ENCODE measurements at regions of chr9 and their contacts with region 1.

Region 1: DNA sequence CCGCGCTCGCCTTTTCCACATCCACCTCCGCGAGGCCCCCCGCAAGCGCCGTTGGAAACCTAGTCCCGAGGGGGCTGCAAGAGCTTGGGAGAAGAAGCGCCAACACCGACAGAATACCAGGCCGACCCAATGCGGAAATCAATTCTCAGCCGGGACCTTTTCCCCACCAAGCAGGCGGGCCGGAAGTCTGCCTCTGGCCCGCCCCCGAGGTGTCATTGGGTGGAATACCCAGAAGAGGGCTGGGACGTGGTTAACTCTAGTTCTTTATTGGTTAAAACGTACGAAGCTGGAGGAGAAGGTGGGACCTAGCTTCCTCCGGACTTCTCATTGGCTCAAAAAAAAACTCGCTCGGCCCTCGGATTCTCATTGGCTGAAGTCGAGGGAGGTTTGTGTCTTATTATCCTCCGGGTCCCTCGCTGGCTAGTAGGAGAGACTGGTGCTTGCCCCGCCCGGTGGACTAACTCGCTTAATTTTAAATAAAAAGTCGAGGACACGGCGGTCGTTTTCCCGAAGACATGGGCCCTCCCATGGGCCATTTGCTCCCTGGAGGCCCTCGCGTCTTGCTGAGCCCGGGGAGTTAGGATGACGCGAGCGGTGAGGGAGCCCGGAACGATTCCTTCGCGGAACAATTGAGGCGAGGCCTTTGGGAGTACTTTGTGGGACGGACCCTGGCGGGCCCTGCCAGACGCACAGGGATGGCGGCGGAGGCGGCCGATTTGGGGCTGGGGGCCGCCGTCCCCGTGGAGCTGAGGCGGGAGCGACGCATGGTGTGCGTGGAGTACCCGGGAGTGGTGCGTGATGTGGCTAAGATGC is at the start of gene GTF3C5:
- DNase-seq: peak; percentile 80 to 98 (median 91)
- ATAC-seq: peak; percentile 97
- H3K4me3 ChIP-seq: peak within 1 kb of the TSS; percentile 60 to 96
- H3K4me3 Mint-ChIP-seq: peak within 1 kb of the TSS; percentile 99
- H3K27ac ChIP-seq: peak within 1 kb of the TSS; percentile 75 to 94
- H3K27ac Mint-ChIP-seq: peak within 1 kb of the TSS; percentile 98
- H3K4me1 ChIP-seq: peaks cover 27% of the 10 kb centered on the region
- H3K4me1 Mint-ChIP-seq: peaks cover 54% of the 10 kb centered on the region
- H3K27me3 ChIP-seq: no peaks in the 10 kb centered on the region
- H3K27me3 Mint-ChIP-seq: no peaks in the 10 kb centered on the region
- CTCF ChIP-seq: no peak
- total RNA-seq, gene GTF3C5: 54.1 to 58.7 TPM

Region 2: GRCh38 chr9:131530920-131531832 is 1499.3 kb before region 1 on chr9 and contains the start of gene UCK1:
- CTCF ChIA-PET with region 1: no interaction called
- POLR2A ChIA-PET with region 1: no interaction called
- intact Hi-C with region 1: loop called in 1 of 2 experiments (anchors 5 kb)
- DNase-seq: peak; percentile 42 to 89 (median 68)
- ATAC-seq: peak; percentile 91
- H3K4me3 ChIP-seq: peak within 1 kb of the TSS; percentile 64 to 73
- H3K4me3 Mint-ChIP-seq: peak within 1 kb of the TSS; percentile 74
- H3K27ac ChIP-seq: peak within 1 kb of the TSS; percentile 51 to 53
- H3K27ac Mint-ChIP-seq: peak within 1 kb of the TSS; percentile 55
- H3K4me1 ChIP-seq: peaks cover 35% of the 10 kb centered on the region
- H3K4me1 Mint-ChIP-seq: peaks cover 35% of the 10 kb centered on the region
- H3K27me3 ChIP-seq: no peaks in the 10 kb centered on the region
- H3K27me3 Mint-ChIP-seq: no peaks in the 10 kb centered on the region
- CTCF ChIP-seq: no peak
- total RNA-seq, gene UCK1: 22.6 to 24.7 TPM

Region 3: DNA sequence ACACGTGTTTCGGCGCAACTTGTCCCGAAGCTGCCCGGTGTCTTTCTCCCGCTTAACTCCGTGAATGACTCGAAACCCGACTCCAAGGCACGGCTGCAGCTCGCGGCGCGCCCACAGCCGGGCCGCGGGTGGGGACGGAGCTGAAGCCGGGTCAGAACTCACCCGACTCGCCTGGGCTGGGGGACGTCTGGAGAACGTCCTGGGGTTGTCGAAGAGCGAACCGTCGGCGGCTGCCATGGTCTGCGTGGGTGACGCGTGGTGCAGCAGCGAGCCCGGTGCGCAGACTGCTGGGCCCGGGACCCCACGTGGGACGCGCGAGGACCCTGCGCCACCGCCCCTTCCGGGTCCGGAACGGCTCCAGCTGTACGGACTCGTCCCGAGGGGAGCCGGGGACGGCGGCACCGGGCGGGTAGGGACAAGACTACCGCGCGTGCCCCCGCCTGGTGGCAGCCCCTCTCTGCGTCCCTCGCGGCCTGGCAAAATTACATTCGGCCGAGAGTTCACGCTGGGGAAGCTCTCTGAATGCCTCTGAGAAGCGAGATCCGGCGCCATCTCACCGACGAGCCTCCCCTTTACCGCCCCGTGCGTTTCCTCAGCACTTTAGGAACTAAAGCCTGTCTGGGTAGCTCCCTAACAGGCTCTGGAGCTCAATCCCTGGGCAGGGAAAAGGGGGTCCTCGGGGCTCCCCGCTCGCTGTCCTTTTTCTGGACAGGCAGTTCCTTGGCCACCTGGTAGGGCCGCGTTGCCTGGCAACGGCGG is 360.6 kb before region 1 on chr9 and contains the start of gene DDX31:
- CTCF ChIA-PET with region 1: no interaction called
- POLR2A ChIA-PET with region 1: interaction called, 4 read pairs
- intact Hi-C with region 1: loop called in 1 of 2 experiments (anchors 5 kb)
- DNase-seq: peak; percentile 79 to 94 (median 88)
- ATAC-seq: peak; percentile 77
- H3K4me3 ChIP-seq: peak within 1 kb of the TSS; percentile 100
- H3K4me3 Mint-ChIP-seq: peak within 1 kb of the TSS; percentile 91
- H3K27ac ChIP-seq: peak within 1 kb of the TSS; percentile 98 to 99
- H3K27ac Mint-ChIP-seq: peak within 1 kb of the TSS; percentile 97
- H3K4me1 ChIP-seq: peaks cover 22% of the 10 kb centered on the region
- H3K4me1 Mint-ChIP-seq: peaks cover 63% of the 10 kb centered on the region
- H3K27me3 ChIP-seq: no peaks in the 10 kb centered on the region
- H3K27me3 Mint-ChIP-seq: no peaks in the 10 kb centered on the region
- CTCF ChIP-seq: no peak
- total RNA-seq, gene DDX31: 14.1 to 15.6 TPM

Region 4: GRCh38 chr9:133004091-133004998 is 26.2 kb before region 1 on chr9:
- CTCF ChIA-PET with region 1: no interaction called
- POLR2A ChIA-PET with region 1: no interaction called
- intact Hi-C with region 1: no loop called
- DNase-seq: no peak
- ATAC-seq: no peak
- H3K4me3 ChIP-seq: no peak overlapping the region
- H3K4me3 Mint-ChIP-seq: no peak overlapping the region
- H3K27ac ChIP-seq: no peak overlapping the region
- H3K27ac Mint-ChIP-seq: no peak overlapping the region
- H3K4me1 ChIP-seq: no peaks in the 10 kb centered on the region
- H3K4me1 Mint-ChIP-seq: no peaks in the 10 kb centered on the region
- H3K27me3 ChIP-seq: peaks cover 3 to 9% of the 10 kb centered on the region in 2 experiments
- H3K27me3 Mint-ChIP-seq: peaks cover 46% of the 10 kb centered on the region
- CTCF ChIP-seq: no peak

Region 5: DNA sequence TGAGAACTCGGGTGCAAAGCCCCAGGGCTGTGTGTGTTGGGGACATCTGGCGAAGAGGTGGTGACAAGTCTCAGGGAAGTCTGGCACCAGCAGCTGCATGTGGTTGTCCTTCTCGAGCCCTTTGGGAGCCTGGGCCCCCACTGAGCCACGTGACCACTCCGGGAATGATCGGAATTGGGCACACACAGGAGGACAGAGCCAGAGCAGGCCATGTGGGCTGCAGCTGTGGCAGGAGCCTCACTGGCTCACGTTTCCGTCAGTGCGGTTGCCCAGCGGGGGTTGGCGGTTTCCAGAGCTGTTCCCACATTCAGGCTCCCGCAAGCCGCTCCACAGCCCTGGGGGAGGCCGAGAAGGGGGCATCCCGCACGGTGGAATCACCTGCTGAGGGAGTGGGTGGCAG is 24.4 kb after region 1 on chr9:
- CTCF ChIA-PET with region 1: no interaction called
- POLR2A ChIA-PET with region 1: no interaction called
- intact Hi-C with region 1: no loop called
- DNase-seq: no peak
- ATAC-seq: no peak
- H3K4me3 ChIP-seq: no peak overlapping the region
- H3K4me3 Mint-ChIP-seq: no peak overlapping the region
- H3K27ac ChIP-seq: no peak overlapping the region
- H3K27ac Mint-ChIP-seq: no peak overlapping the region
- H3K4me1 ChIP-seq: peaks cover 37% of the 10 kb centered on the region
- H3K4me1 Mint-ChIP-seq: peaks cover 29% of the 10 kb centered on the region
- H3K27me3 ChIP-seq: no peaks in the 10 kb centered on the region
- H3K27me3 Mint-ChIP-seq: no peaks in the 10 kb centered on the region
- CTCF ChIP-seq: no peak

Region 6: DNA sequence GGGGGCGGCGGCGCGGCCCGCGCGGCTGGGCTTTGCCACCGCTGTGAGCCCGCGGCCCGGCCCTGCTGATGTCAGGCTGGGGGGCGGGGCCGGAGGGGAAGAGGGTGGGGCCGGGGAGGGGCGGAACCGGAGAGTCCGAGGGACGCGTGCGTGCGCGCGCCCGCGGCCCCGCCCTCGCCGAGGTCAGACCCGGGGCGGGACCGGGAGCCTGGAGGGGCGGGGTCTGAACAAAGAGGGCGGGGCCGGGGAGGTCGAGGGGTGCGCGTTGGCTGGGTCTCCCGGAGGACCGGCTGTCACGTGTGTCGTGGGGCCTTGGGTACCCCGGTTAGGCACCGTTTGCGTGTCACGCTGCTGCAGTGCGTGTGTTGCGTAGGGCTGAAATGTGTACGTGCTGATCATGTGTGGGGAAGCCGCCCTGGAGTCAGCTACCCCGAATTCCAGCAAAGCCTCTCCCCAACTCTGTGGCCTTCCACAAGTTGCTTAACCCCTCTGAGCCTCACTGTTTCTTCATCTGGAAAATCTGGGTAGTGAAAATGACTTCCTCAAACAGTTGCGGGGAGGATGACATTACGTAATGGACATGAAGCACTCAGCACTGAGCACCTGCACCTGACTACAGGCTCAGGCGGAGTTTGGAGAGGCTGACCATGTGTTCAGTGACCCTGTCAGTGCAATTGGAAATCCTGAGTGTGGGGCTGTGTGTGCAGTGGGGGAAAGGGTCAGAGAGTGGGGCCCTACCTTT is 90.8 kb after region 1 on chr9 and contains the start of gene RALGDS:
- CTCF ChIA-PET with region 1: interaction called, 3 read pairs
- POLR2A ChIA-PET with region 1: interaction called, 5 read pairs
- intact Hi-C with region 1: loop called in 1 of 2 experiments (anchors 1 kb)
- DNase-seq: peak; percentile 84 to 95 (median 92)
- ATAC-seq: peak; percentile 83
- H3K4me3 ChIP-seq: peak within 1 kb of the TSS; percentile 41 to 53
- H3K4me3 Mint-ChIP-seq: peak within 1 kb of the TSS; percentile 84
- H3K27ac ChIP-seq: peak within 1 kb of the TSS; percentile 66 to 96
- H3K27ac Mint-ChIP-seq: peak within 1 kb of the TSS; percentile 98
- H3K4me1 ChIP-seq: peaks cover 63% of the 10 kb centered on the region
- H3K4me1 Mint-ChIP-seq: peaks cover 70% of the 10 kb centered on the region
- H3K27me3 ChIP-seq: no peaks in the 10 kb centered on the region
- H3K27me3 Mint-ChIP-seq: no peaks in the 10 kb centered on the region
- CTCF ChIP-seq: no peak
- total RNA-seq, gene RALGDS: 177 to 186 TPM

Region 7: DNA sequence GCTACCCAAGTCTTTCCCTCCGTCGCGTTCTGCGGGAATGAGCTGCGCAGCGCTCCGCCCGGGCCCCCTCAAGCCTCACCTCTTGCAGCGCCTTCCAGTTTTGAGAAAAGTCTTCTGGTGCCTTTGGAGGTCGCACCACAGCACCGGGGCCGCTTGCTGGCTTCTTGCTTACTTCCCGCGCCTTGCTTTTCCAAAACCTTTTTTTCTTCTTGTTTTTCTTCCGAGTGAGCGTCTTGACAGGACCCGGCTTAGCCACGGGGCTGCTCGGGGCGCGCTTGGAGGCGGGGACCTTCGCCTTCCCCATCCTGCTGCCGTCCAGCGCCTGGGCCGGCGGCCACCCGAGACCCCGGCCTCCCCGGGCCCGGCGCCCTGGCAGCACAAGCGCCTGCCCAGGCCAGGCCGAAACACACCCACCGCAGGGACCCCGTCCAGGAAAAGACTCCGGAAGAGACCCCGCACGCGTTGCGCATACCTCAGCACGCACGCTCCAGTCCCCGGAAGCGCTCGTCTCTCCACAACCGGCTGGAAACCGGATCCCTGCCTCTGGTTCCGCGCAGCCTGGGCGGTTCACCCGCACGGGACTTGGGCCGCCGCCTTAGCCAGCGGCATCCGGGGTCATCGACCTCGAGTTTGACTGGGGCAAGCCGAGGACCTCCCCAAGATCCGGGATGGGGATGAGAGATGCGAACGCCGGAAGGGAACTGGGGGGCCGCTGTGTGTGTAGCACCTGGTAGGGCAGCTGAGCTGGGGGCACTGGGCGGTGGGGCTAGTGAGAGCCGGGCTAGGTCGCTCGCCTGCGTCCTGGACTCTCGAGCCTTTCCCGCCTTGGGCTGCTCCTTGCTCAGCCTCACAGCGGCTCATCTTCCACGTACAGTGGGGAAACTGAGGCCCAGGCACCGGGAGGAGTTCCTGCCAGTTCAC is 387.3 kb after region 1 on chr9 and contains the start of gene REXO4:
- CTCF ChIA-PET with region 1: no interaction called
- POLR2A ChIA-PET with region 1: no interaction called
- intact Hi-C with region 1: loop called in 1 of 2 experiments (anchors 2 kb)
- DNase-seq: peak; percentile 73 to 91 (median 81)
- ATAC-seq: peak; percentile 88
- H3K4me3 ChIP-seq: peak within 1 kb of the TSS; percentile 80 to 88
- H3K4me3 Mint-ChIP-seq: peak within 1 kb of the TSS; percentile 87
- H3K27ac ChIP-seq: peak within 1 kb of the TSS; percentile 68 to 89
- H3K27ac Mint-ChIP-seq: peak within 1 kb of the TSS; percentile 90
- H3K4me1 ChIP-seq: peaks cover 23% of the 10 kb centered on the region
- H3K4me1 Mint-ChIP-seq: peaks cover 54% of the 10 kb centered on the region
- H3K27me3 ChIP-seq: no peaks in the 10 kb centered on the region
- H3K27me3 Mint-ChIP-seq: no peaks in the 10 kb centered on the region
- CTCF ChIP-seq: no peak
- total RNA-seq, gene REXO4: 22.5 to 24.0 TPM

Region 8: GRCh38 chr9:133478851-133479711 is 448.6 kb after region 1 on chr9 and contains the start of gene SLC2A6:
- CTCF ChIA-PET with region 1: no interaction called
- POLR2A ChIA-PET with region 1: no interaction called
- intact Hi-C with region 1: loop called (anchors 2 to 10 kb)
- DNase-seq: peak; percentile 58 to 92 (median 81)
- ATAC-seq: peak; percentile 96
- H3K4me3 ChIP-seq: peak within 1 kb of the TSS; percentile 62 to 65
- H3K4me3 Mint-ChIP-seq: peak within 1 kb of the TSS; percentile 75
- H3K27ac ChIP-seq: peak within 1 kb of the TSS; percentile 56 to 59
- H3K27ac Mint-ChIP-seq: peak within 1 kb of the TSS; percentile 72
- H3K4me1 ChIP-seq: peaks cover 15% of the 10 kb centered on the region
- H3K4me1 Mint-ChIP-seq: peaks cover 10% of the 10 kb centered on the region
- H3K27me3 ChIP-seq: no peaks in the 10 kb centered on the region
- H3K27me3 Mint-ChIP-seq: no peaks in the 10 kb centered on the region
- CTCF ChIP-seq: no peak
- total RNA-seq, gene SLC2A6: 8.0 to 9.7 TPM